Activated T-helper 1 cell treated with anti-CD3 and anti-CD28 coated beads, Interleukin-12 subunit alpha, Interleukin-12 subunit beta, Interleukin-2, Interleukin-4 antibody, amounts not matched to agents 30 ng/mL and 10 ng/mL and 1 ng/mL, durations not matched to agents 14 hours and 24 hours and 36 hours (primary cell): ENCODE measurements at regions of chr21 and their contacts with region 1.

Region 1: GRCh38 chr21:34946916-34947534 is 102.1 kb downstream of the RUNX1 start:
- DNase-seq: no peak
- H3K4me3 Mint-ChIP-seq: no peak overlapping the region
- H3K27ac Mint-ChIP-seq: peak overlapping the region; percentile 90
- H3K4me1 Mint-ChIP-seq: peaks cover 62% of the 10 kb centered on the region
- H3K27me3 Mint-ChIP-seq: no peaks in the 10 kb centered on the region

Region 2: GRCh38 chr21:33588485-33589335 is 1358.3 kb before region 1 on chr21 and contains the start of gene DONSON:
- intact Hi-C with region 1: no loop called
- DNase-seq: peak; percentile 90
- H3K4me3 Mint-ChIP-seq: peak within 1 kb of the TSS; percentile 92
- H3K27ac Mint-ChIP-seq: peak within 1 kb of the TSS; percentile 84
- H3K4me1 Mint-ChIP-seq: peaks cover 31% of the 10 kb centered on the region
- H3K27me3 Mint-ChIP-seq: no peaks in the 10 kb centered on the region
- total RNA-seq, gene DONSON: 37.5 and 38.7 TPM in 2 replicates

Region 3: DNA sequence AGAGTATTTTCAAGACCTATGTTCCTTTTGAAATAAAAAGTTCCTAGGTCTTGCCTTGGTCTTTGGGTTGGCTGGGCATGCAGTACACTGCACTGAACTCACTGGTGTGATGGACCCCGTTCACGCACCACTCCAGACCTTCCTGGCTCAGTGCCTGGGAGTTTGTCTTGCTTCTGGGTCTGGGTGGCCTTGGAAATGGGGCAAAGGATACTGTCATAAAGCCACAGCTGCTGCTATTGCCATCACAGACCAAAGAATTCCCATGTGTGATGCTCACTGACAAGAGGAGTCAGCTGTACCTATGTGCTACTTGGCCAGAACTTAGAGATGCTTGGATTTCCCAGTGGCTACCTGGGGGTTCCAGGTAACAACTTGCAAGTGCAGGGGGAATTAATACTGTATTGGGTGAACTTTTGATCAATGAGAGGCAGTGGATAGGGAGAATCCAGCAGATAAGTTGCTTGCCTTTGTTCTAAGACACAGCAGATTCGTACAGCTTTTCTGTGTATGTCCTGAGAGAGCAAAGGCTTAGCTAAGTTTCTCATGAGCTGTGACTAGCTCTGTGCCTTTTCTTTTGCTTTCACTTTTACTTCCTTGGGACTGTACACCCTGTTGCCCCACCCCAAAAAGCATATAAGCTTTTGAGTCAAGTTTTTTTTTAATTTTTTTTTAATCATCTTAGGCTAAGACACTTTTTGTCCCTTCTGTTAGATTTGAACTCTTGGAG is 13.3 kb before region 1 on chr21:
- intact Hi-C with region 1: loop called (anchors 1 kb)
- DNase-seq: peak; percentile 37
- H3K4me3 Mint-ChIP-seq: peak overlapping the region; percentile 75
- H3K27ac Mint-ChIP-seq: peak overlapping the region; percentile 95
- H3K4me1 Mint-ChIP-seq: peaks cover 86% of the 10 kb centered on the region
- H3K27me3 Mint-ChIP-seq: no peaks in the 10 kb centered on the region

Region 4: DNA sequence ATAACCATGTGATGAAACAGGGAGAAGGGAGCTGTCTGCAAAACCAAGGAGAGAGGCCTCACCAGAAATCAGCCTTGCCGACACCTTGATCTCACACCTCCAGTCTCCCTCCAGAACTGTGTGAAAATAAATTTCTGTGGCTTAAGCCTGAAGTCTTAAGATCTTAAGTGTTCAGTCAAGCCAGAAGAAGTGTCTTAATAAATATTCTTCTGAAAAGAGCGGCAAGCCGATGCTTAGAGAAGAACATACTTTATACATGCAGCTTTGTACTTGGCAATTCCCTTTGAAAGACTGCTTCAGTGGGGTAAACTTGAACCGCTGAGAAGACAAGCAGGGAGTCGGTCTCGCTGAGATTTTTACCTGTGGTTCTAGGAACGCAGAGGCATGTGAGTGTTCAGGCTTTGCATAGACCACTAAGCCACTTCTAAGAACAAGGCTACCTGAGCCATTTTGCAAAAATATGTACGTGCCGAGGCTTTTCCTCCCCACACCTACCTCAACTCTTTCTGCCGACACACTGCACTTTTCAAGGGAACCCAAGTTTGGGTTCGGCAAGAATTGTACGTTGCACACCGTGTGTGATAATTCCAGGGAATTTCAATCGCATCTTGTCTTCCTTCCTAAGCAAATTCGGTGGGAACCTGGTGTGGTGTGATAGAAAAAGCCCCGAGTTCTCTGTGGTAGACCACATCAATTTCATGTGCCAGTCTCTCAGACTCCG is 98.7 kb after region 1 on chr21:
- intact Hi-C with region 1: loop called (anchors 1 kb)
- DNase-seq: peak; percentile 58
- H3K4me3 Mint-ChIP-seq: peak overlapping the region; percentile 93
- H3K27ac Mint-ChIP-seq: peak overlapping the region; percentile 98
- H3K4me1 Mint-ChIP-seq: peaks cover 95% of the 10 kb centered on the region
- H3K27me3 Mint-ChIP-seq: no peaks in the 10 kb centered on the region